Activated CD8-positive, alpha-beta T cell treated with anti-CD3 and anti-CD28 coated beads for 36 hours (primary cell): ENCODE measurements at regions of chr4 and their contacts with region 1.

Region 1: DNA sequence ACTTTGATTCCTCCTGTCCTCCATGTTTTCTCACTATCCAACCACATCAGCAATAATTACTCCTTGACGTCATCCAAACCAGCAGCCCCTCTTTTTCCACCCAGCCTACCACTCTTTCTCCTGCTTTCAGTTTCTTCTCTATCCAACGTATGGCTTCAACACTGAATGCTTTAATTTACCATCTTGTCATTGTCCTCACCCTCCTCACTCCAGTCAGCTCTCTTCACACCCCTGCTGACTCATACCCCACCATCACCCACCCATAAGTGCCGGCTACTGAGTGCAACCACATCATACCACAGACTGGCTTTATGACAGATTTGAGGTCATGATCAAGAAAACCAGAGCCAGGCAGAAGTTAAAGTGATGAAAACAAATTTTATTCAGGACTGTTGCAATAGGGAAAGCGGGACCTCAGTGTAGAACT is 9.8 kb upstream of the ANXA5 start:
- DNase-seq: peak; percentile 86
- ATAC-seq: peak; percentile 92
- H3K4me3 Mint-ChIP-seq: peak overlapping the region; percentile 34
- H3K27ac Mint-ChIP-seq: peak overlapping the region; percentile 72
- H3K4me1 Mint-ChIP-seq: peaks cover 31% of the 10 kb centered on the region
- H3K27me3 Mint-ChIP-seq: peaks cover 37% of the 10 kb centered on the region
- CTCF ChIP-seq: no peak

Region 2: GRCh38 chr4:121654738-121655137 is 51.9 kb before region 1 on chr4:
- CTCF ChIA-PET with region 1: no interaction called
- POLR2A ChIA-PET with region 1: no interaction called
- intact Hi-C with region 1: no loop called
- DNase-seq: no peak
- ATAC-seq: no peak
- H3K4me3 Mint-ChIP-seq: no peak overlapping the region
- H3K27ac Mint-ChIP-seq: no peak overlapping the region
- H3K4me1 Mint-ChIP-seq: no peaks in the 10 kb centered on the region
- H3K27me3 Mint-ChIP-seq: peaks cover 3% of the 10 kb centered on the region
- CTCF ChIP-seq: no peak

Region 3: DNA sequence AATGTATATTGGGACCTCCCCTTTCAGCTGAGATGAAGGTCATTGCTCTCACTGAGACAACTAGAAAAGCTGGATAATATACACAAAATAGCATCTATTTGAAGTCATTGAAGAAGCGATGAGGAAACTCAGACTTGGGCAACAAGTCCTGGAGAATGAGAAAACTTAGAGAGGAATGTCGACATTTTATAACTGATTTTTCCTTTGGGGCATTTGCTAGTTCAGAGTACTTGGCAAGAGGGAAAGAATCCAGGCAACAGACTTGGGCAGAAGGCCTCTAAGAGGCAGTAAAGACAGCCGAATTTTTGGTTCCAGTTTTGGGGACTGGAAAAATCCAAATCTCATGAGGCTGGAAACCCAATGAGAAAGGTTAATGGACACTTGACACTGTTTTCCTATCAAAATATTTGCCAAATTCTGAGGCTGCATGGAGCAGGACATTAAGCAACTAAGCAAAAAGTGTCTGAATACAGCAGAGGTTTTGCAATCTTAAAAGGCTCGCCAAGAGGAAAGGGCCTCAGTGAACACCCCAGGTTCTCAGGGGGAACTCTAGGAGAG is 11.2 kb after region 1 on chr4:
- CTCF ChIA-PET with region 1: no interaction called
- POLR2A ChIA-PET with region 1: no interaction called
- intact Hi-C with region 1: no loop called
- DNase-seq: no peak
- ATAC-seq: no peak
- H3K4me3 Mint-ChIP-seq: no peak overlapping the region
- H3K27ac Mint-ChIP-seq: no peak overlapping the region
- H3K4me1 Mint-ChIP-seq: no peaks in the 10 kb centered on the region
- H3K27me3 Mint-ChIP-seq: peaks cover 21% of the 10 kb centered on the region
- CTCF ChIP-seq: no peak

Region 4: GRCh38 chr4:121800961-121801714 is 94.5 kb after region 1 on chr4 and contains the start of gene EXOSC9:
- CTCF ChIA-PET with region 1: no interaction called
- POLR2A ChIA-PET with region 1: no interaction called
- intact Hi-C with region 1: loop called (anchors 5 kb)
- DNase-seq: peak; percentile 90
- ATAC-seq: peak; percentile 86
- H3K4me3 Mint-ChIP-seq: peak within 1 kb of the TSS; percentile 82
- H3K27ac Mint-ChIP-seq: peak within 1 kb of the TSS; percentile 96
- H3K4me1 Mint-ChIP-seq: peaks cover 44% of the 10 kb centered on the region
- H3K27me3 Mint-ChIP-seq: no peaks in the 10 kb centered on the region
- CTCF ChIP-seq: no peak
- total RNA-seq, gene EXOSC9: 75.8 to 76.8 TPM